Ovary (tissue), 10 donors: ENCODE measurements at regions of chr11 and their contacts with region 1.

Region 1: GRCh38 chr11:4539603-4540219 is 5.3 kb upstream of the OR52M1 start:
- DNase-seq: peak; percentile 53 to 79 (median 74)
- H3K4me3 ChIP-seq: no peak overlapping the region
- H3K27ac ChIP-seq: no peak overlapping the region
- H3K4me1 ChIP-seq: no peaks in the 10 kb centered on the region
- H3K27me3 ChIP-seq: no peaks in the 10 kb centered on the region
- CTCF ChIP-seq: peak; percentile 32 to 53 (median 50)
- EP300 ChIP-seq: no peak
- POLR2A ChIP-seq: no peak

Region 2: DNA sequence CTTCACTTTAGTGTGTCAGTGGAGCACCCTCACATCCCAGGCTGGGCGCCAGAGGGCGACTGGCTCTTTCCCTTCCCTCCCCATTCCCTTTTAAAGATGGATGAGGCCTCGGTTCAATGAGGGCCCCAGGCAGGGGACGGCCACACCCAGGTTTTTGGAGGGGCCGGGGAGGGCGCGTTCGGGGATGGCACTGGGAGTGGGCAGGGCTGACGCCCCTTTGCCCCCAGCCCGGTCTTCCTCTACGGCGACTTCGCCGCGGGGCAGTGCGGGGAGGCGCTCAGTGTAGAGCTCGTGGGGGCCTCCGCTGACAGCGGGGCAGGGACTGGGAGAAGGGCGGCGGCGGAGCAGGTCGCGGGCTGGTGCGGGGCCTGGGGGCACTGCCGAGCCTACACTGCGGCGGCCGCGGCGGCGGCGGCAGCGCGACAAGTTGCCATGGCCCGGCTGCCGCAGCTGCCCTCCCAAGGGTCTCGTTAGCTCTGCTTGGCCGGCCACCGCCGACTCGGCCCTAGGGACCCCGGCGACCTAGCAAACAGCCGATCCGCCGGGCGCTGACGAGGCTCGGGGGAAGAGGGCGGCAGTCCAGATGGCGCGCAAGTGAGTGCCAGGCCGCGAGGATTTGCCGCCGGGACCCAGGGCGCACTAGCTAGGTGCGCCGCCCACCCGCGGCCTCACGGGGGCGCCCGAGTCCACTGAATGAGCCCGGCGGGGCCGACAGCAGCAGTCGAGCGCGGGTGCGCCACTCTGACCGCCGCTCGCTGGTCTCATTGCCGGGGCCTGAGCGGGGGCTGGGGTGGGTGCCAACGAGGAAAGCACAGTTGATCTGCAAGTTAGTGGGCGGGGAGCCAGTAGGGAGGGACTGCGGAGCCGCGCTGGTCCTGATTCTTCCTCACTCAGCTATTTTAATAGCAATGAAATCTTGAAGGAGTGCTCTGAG is 352.4 kb before region 1 on chr11:
- intact Hi-C with region 1: loop called in 3 of 4 experiments (anchors 5 kb)
- DNase-seq: peak; percentile 98 to 99 (median 99)
- H3K4me3 ChIP-seq: peak overlapping the region; percentile 52
- H3K27ac ChIP-seq: peak overlapping the region; percentile 61 to 78
- H3K4me1 ChIP-seq: peaks cover 3% of the 10 kb centered on the region
- H3K27me3 ChIP-seq: no peaks in the 10 kb centered on the region
- CTCF ChIP-seq: peak; percentile 92 to 95 (median 94)
- EP300 ChIP-seq: no peak
- POLR2A ChIP-seq: no peak

Region 3: GRCh38 chr11:4610258-4610935 is 70.7 kb after region 1 on chr11:
- intact Hi-C with region 1: no loop called
- DNase-seq: no peak
- H3K4me3 ChIP-seq: peak overlapping the region; percentile 4
- H3K27ac ChIP-seq: peak overlapping the region; percentile 3 to 14
- H3K4me1 ChIP-seq: peaks cover 6% of the 10 kb centered on the region
- H3K27me3 ChIP-seq: no peaks in the 10 kb centered on the region
- CTCF ChIP-seq: no peak
- EP300 ChIP-seq: no peak
- POLR2A ChIP-seq: no peak